SK-N-SH (cell line): ENCODE measurements at regions of chr10 and their contacts with region 1.

Region 1: GRCh38 chr10:88990384-88991160 is at the start of gene FAS:
- DNase-seq: peak; percentile 65
- H3K4me3 ChIP-seq: peak within 1 kb of the TSS; percentile 77 to 89
- H3K27ac ChIP-seq: peak within 1 kb of the TSS; percentile 60 to 81
- H3K4me1 ChIP-seq: peaks cover 8 to 28% of the 10 kb centered on the region in 2 experiments; a peak in 3 of 4 replicates
- H3K27me3 ChIP-seq: no peaks in the 10 kb centered on the region
- CTCF ChIP-seq: no peak
- EP300 ChIP-seq: no peak
- RAD21 ChIP-seq: no peak
- polyA plus RNA-seq, gene FAS: 31.5 and 44.2 TPM in 2 replicates

Region 2: GRCh38 chr10:88901206-88901983 is 89.2 kb before region 1 on chr10:
- CTCF ChIA-PET with region 1: no interaction called
- POLR2A ChIA-PET with region 1: no interaction called
- DNase-seq: no peak
- H3K4me3 ChIP-seq: no peak overlapping the region
- H3K27ac ChIP-seq: peak overlapping the region; percentile 39 to 69; a peak in 3 of 4 replicates
- H3K4me1 ChIP-seq: peaks cover 15 to 38% of the 10 kb centered on the region in 2 experiments; a peak in 3 of 4 replicates
- H3K27me3 ChIP-seq: no peaks in the 10 kb centered on the region
- CTCF ChIP-seq: no peak
- EP300 ChIP-seq: peak in 1 of 2 experiments; percentile 30; a peak in 1 of 4 replicates
- RAD21 ChIP-seq: no peak

Region 3: DNA sequence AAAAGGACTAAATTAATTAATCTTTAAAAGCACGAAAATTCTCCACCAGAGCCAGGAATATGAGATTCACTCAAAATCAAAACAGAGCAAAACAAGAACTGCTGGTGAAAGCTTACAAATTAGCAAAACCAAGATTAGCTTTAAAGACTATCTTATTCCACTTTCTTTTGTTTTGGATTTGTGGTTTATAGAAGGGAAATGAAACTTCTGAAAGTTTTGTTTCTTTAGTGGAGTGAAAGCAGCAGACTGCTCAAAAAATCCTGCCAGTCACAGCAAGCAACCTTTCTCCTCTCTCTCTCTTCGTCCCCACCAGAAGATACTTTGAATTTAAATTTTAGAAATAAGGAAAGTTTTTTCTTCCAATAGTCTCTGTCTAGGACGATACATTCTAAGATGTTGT is 45.8 kb before region 1 on chr10:
- CTCF ChIA-PET with region 1: interaction called, 14 read pairs
- POLR2A ChIA-PET with region 1: no interaction called
- DNase-seq: no peak
- H3K4me3 ChIP-seq: no peak overlapping the region
- H3K27ac ChIP-seq: no peak overlapping the region
- H3K4me1 ChIP-seq: peaks cover 6 to 8% of the 10 kb centered on the region in 2 experiments; a peak in 3 of 4 replicates
- H3K27me3 ChIP-seq: no peaks in the 10 kb centered on the region
- CTCF ChIP-seq: no peak
- EP300 ChIP-seq: no peak
- RAD21 ChIP-seq: no peak

Region 4: DNA sequence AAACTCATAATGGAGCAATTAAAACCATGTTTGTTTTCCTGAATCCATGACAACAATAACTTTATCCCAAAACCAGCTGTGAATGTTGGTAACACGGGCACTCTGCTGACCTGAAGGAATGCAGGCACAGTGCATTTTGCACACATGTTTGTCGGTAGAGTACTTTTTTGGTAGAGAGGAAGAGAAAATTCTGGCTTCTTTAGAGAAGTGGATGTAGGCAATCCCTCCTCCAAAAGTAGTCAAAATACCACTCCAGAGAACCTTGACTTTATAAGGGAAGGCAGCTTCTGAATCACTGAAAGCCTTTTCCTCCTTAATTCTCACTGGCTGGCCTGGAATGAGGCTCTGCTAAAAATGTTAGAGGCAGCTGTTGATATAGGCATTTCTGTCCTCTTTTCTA is 22.2 kb before region 1 on chr10:
- CTCF ChIA-PET with region 1: interaction called, 14 read pairs
- POLR2A ChIA-PET with region 1: no interaction called
- DNase-seq: no peak
- H3K4me3 ChIP-seq: no peak overlapping the region
- H3K27ac ChIP-seq: no peak overlapping the region
- H3K4me1 ChIP-seq: peaks cover 0 to 6% of the 10 kb centered on the region in 2 experiments; a peak in 1 of 4 replicates
- H3K27me3 ChIP-seq: no peaks in the 10 kb centered on the region
- CTCF ChIP-seq: no peak
- EP300 ChIP-seq: no peak
- RAD21 ChIP-seq: no peak

Region 5: GRCh38 chr10:89207181-89207800 is 216.7 kb after region 1 on chr10 and contains the start of gene CH25H:
- CTCF ChIA-PET with region 1: interaction called, 11 read pairs
- POLR2A ChIA-PET with region 1: no interaction called
- DNase-seq: peak; percentile 72
- H3K4me3 ChIP-seq: peak within 1 kb of the TSS; percentile 49 to 67
- H3K27ac ChIP-seq: no peak within 1 kb of the TSS
- H3K4me1 ChIP-seq: peaks cover 7 to 19% of the 10 kb centered on the region in 2 experiments; a peak in 3 of 4 replicates
- H3K27me3 ChIP-seq: peaks cover 22% of the 10 kb centered on the region; the same call in 1 of the 2 replicates
- CTCF ChIP-seq: no peak
- EP300 ChIP-seq: no peak
- RAD21 ChIP-seq: no peak
- polyA plus RNA-seq, gene CH25H: not detected in 2 replicates